ENCODE measurements at regions of chr11 and their contacts with region 1.

Region 1: GRCh38 chr11:118206391-118207031 is 18.3 kb downstream of the JAML start:
- DNase-seq: no peak
- ATAC-seq: peak in 1 of 2 donors; percentile 31
- H3K4me3 Mint-ChIP-seq: peak overlapping the region in 9 of 10 donors; percentile 58 to 80 (median 68)
- H3K27ac Mint-ChIP-seq: peak overlapping the region in 7 of 10 donors; percentile 85 to 94 (median 91)
- H3K4me1 Mint-ChIP-seq: peaks cover 20 to 44% (median 30%) of the 10 kb centered on the region in 4 donors
- H3K27me3 Mint-ChIP-seq: no peaks in the 10 kb centered on the region

Region 2: GRCh38 chr11:118216621-118217481 is 10.3 kb after region 1 on chr11:
- POLR2A ChIA-PET with region 1: interaction called, 19 read pairs
- DNase-seq: peak in 1 of 10 donors; percentile 21
- ATAC-seq: peak; percentile 52 to 57
- H3K4me3 Mint-ChIP-seq: peak overlapping the region in 9 of 10 donors; percentile 74 to 90 (median 86)
- H3K27ac Mint-ChIP-seq: peak overlapping the region in 8 of 10 donors; percentile 87 to 96 (median 94)
- H3K4me1 Mint-ChIP-seq: peaks cover 72 to 100% (median 98%) of the 10 kb centered on the region in 4 donors
- H3K27me3 Mint-ChIP-seq: no peaks in the 10 kb centered on the region

Region 3: GRCh38 chr11:118295834-118296454 is 89.4 kb after region 1 on chr11:
- POLR2A ChIA-PET with region 1: no interaction called
- DNase-seq: peak in 9 of 10 donors; percentile 25 to 76 (median 37)
- ATAC-seq: peak; percentile 80 to 82
- H3K4me3 Mint-ChIP-seq: peak overlapping the region in 3 of 10 donors; percentile 9 to 30 (median 22)
- H3K27ac Mint-ChIP-seq: peak overlapping the region; percentile 63 to 92 (median 84)
- H3K4me1 Mint-ChIP-seq: peaks cover 17 to 41% (median 27%) of the 10 kb centered on the region in 4 donors
- H3K27me3 Mint-ChIP-seq: peaks cover 0 to 1% (median 0%) of the 10 kb centered on the region in 5 donors

Region 4: GRCh38 chr11:118448294-118448693 is 241.8 kb after region 1 on chr11:
- POLR2A ChIA-PET with region 1: no interaction called
- DNase-seq: no peak
- ATAC-seq: no peak
- H3K4me3 Mint-ChIP-seq: no peak overlapping the region
- H3K27ac Mint-ChIP-seq: peak overlapping the region in 3 of 10 donors; percentile 31 to 49 (median 43)
- H3K4me1 Mint-ChIP-seq: peaks cover 39 to 74% (median 71%) of the 10 kb centered on the region in 4 donors
- H3K27me3 Mint-ChIP-seq: no peaks in the 10 kb centered on the region

Measured in naive thymus-derived CD8-positive, alpha-beta T cell (primary cell).